ENCODE measurements at regions of chr12 and their contacts with region 1.

Region 1: DNA sequence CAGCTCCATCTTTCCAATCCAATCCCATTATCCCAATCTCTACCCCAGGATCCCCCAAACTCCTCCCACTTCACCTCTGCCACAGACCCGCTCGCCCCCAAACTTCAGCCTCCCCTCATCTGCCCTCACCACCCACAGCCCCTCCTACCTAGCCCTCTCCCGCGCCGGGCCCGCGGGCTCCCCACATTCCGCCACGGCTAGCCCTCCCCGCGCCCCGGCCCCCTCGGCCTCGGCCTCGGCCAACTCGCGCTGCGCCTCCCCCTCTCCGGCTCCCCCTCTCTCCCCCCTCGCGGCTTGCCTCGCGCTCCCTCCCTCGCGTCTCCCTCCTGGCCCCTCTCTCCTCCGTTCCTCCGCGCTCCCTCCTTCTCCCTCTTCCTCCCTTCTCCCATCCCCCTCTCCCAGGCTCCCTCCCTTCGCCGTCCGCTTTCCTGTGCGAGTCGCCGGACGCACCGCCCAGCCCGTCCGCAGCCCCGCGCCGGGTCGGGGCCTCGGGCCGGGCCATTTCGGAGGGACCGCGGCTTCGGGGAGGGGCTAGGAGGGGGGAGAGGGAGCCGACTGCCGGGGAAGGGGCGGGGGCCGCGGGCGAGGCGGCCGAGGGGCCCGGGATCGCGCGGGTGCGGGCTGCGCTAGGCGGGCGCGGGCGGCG is at the start of gene ATN1:
- DNase-seq: peak in 5 of 9 donors; percentile 41 to 66 (median 43)
- ATAC-seq: peak; percentile 35
- H3K4me3 ChIP-seq: peak within 1 kb of the TSS; percentile 64
- H3K4me3 Mint-ChIP-seq: peak within 1 kb of the TSS; percentile 85 to 99 (median 92)
- H3K27ac ChIP-seq: peak within 1 kb of the TSS; percentile 86
- H3K27ac Mint-ChIP-seq: peak within 1 kb of the TSS; percentile 88 to 98 (median 95)
- H3K4me1 ChIP-seq: peaks cover 16 to 37% of the 10 kb centered on the region in 2 donors
- H3K4me1 Mint-ChIP-seq: peaks cover 38 to 69% (median 56%) of the 10 kb centered on the region in 7 donors
- H3K27me3 ChIP-seq: no peaks in the 10 kb centered on the region
- H3K27me3 Mint-ChIP-seq: no peaks in the 10 kb centered on the region
- total RNA-seq, gene ATN1: 29.5 to 42.2 (median 34.4) TPM

Region 2: DNA sequence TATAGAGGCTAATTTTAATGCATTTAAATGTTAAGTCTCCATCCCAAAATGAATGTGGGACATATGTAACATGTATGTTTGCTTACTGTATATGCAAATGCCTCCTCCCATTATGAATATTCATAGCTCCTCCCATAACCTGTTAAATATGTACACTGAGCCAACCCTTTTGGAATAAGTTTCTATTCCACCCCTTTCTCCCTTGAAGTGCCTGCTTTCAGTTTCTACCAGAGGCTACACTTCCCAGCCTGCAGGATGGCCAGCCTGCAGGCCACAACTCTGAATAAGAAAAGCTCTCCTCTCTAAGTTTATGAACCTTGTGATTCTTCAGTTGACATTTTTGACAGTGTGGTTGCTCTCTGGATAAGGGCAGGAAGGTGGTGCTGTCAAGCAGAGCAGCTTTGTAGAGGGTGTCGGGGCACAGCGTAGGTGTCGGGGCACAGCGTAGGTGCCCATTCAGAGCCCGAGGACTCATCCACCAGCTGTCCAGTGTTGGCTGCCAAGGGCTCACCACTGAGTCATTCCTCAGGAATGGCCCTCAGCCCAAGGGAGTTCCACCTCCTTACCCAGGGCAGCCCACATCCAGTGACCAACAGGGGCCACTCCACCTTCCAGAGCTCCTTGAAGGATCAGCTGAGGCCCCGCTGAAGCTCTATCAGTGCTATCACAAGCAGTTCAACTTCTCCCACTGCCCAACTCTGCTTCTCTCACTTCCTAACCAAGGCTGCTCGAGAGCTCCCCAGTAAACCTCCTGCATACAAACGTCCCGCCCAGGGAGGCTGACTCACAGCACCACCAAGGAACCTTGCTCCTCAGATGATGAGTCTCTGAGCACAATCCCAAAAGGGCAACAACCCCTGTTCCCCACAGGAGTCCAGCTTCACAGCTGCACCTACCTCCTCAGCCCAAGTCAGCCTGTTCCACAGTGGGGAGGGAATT is 834.4 kb before region 1 on chr12:
- CTCF ChIA-PET with region 1: no interaction called
- POLR2A ChIA-PET with region 1: no interaction called
- intact Hi-C with region 1: no loop called
- DNase-seq: no peak
- ATAC-seq: peak; percentile 57
- H3K4me3 ChIP-seq: no peak overlapping the region
- H3K4me3 Mint-ChIP-seq: no peak overlapping the region
- H3K27ac ChIP-seq: no peak overlapping the region
- H3K27ac Mint-ChIP-seq: peak overlapping the region in 2 of 9 donors; percentile 20 to 84
- H3K4me1 ChIP-seq: no peaks in the 10 kb centered on the region
- H3K4me1 Mint-ChIP-seq: peaks cover 0 to 17% (median 6%) of the 10 kb centered on the region in 7 donors
- H3K27me3 ChIP-seq: peaks cover 0 to 4% of the 10 kb centered on the region in 2 donors
- H3K27me3 Mint-ChIP-seq: peaks cover 0 to 20% (median 6%) of the 10 kb centered on the region in 5 donors

Region 3: GRCh38 chr12:6796576-6796975 is 130.9 kb before region 1 on chr12:
- CTCF ChIA-PET with region 1: no interaction called
- POLR2A ChIA-PET with region 1: no interaction called
- intact Hi-C with region 1: no loop called
- DNase-seq: no peak
- ATAC-seq: no peak
- H3K4me3 ChIP-seq: no peak overlapping the region
- H3K4me3 Mint-ChIP-seq: peak overlapping the region in 3 of 10 donors; percentile 2 to 47 (median 45)
- H3K27ac ChIP-seq: no peak overlapping the region
- H3K27ac Mint-ChIP-seq: peak overlapping the region in 6 of 9 donors; percentile 52 to 97 (median 75)
- H3K4me1 ChIP-seq: peaks cover 0 to 28% of the 10 kb centered on the region in 2 donors
- H3K4me1 Mint-ChIP-seq: peaks cover 53 to 85% (median 75%) of the 10 kb centered on the region in 7 donors
- H3K27me3 ChIP-seq: no peaks in the 10 kb centered on the region
- H3K27me3 Mint-ChIP-seq: no peaks in the 10 kb centered on the region

Region 4: DNA sequence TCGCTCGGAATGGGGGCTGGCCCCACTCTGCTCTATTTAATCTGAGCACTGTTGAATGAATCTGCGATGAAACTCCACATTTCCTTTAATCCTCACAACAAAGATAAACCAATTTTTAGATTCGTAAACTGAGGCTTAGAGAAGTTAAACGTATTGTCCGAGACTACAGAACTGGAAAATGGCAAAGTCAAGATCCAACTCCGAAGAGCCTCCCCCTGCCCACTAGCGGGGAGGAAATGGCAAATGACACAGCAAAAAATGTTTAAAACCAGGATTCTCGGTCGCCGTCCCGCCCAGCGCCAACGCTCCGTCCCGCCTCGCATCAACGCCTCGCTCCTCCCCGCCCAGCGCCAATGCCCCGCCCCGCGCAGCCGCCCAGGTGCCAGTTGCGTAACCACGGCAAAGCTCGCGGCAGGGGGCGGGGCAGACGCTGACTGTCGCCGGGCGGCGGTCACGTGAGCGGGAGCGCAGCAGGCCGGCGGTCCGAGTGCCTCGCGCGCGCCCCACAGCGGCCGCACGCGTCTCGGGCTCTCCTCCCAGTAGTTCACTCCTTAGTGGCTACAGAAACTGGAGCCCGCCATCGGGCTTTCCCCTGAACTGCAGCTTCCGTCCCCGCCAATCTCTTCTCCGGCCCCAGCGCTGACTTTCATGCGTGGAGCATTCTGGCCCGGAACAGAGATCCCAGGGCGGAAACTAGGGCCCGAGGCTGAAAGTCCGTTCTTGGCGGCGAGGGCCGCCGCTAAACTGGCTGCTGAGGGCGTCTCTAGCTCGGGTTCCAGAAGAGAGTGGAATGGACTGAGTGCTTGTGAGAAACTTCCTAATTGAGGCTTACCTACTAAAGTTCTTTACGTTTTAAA is 36.5 kb before region 1 on chr12:
- CTCF ChIA-PET with region 1: interaction called, 7 read pairs
- POLR2A ChIA-PET with region 1: interaction called, 4 read pairs
- intact Hi-C with region 1: loop called (anchors 1 kb)
- DNase-seq: peak; percentile 95 to 100 (median 97)
- ATAC-seq: peak; percentile 96
- H3K4me3 ChIP-seq: peak overlapping the region; percentile 93
- H3K4me3 Mint-ChIP-seq: peak overlapping the region; percentile 78 to 86 (median 84)
- H3K27ac ChIP-seq: peak overlapping the region; percentile 86
- H3K27ac Mint-ChIP-seq: peak overlapping the region; percentile 82 to 94 (median 90)
- H3K4me1 ChIP-seq: peaks cover 6 to 10% of the 10 kb centered on the region in 2 donors
- H3K4me1 Mint-ChIP-seq: peaks cover 0 to 31% (median 11%) of the 10 kb centered on the region in 7 donors
- H3K27me3 ChIP-seq: no peaks in the 10 kb centered on the region
- H3K27me3 Mint-ChIP-seq: no peaks in the 10 kb centered on the region

Region 5: GRCh38 chr12:6914246-6914946 is 13.1 kb before region 1 on chr12 and contains the start of gene ENO2:
- CTCF ChIA-PET with region 1: interaction called, 14 read pairs
- POLR2A ChIA-PET with region 1: interaction called, 367 read pairs
- intact Hi-C with region 1: loop called (anchors 1 kb)
- DNase-seq: peak; percentile 68 to 90 (median 81)
- ATAC-seq: peak; percentile 96
- H3K4me3 ChIP-seq: peak within 1 kb of the TSS; percentile 79
- H3K4me3 Mint-ChIP-seq: peak within 1 kb of the TSS; percentile 88 to 100 (median 96)
- H3K27ac ChIP-seq: peak within 1 kb of the TSS; percentile 86
- H3K27ac Mint-ChIP-seq: peak within 1 kb of the TSS; percentile 86 to 99 (median 93)
- H3K4me1 ChIP-seq: peaks cover 11 to 14% of the 10 kb centered on the region in 2 donors
- H3K4me1 Mint-ChIP-seq: peaks cover 0 to 53% (median 36%) of the 10 kb centered on the region in 7 donors
- H3K27me3 ChIP-seq: no peaks in the 10 kb centered on the region
- H3K27me3 Mint-ChIP-seq: peaks cover 0 to 4% (median 0%) of the 10 kb centered on the region in 5 donors
- total RNA-seq, gene ENO2: 65.3 to 193 (median 178) TPM

Region 6: DNA sequence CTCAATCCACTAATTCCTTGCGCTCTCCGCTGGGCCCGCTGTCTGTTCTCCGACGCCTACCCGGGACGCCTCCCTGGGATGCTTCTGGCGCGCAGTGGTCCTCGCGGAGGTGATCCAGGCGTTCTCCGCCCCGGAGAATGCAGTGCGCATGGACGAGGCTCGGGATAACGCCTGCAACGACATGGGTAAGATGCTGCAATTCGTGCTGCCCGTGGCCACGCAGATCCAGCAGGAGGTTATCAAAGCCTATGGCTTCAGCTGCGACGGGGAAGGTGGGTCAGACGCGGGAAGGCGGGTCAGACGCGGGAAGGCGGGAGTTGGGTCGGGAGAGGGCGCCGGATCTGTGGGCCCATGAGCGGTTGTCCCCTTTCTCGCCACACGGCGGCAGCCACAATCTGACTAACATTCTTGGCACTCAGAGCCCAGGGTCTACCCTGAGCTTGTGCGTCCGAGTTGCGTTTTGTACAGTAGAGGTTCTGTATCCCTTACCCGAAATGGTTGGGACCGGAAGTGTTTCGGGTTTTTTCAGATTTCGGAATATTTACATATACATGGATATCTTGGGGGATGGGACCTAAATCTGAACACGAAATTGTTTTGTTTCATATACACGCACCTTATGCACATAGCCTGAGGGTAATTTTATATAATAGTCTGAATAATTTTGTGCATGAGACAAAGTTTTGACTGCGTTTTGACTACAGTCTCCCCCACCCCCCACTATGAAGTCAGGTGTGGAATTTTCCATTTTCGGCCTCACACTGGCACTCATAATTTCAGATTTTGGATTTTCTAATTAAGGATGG is 17.1 kb after region 1 on chr12:
- CTCF ChIA-PET with region 1: interaction called, 14 read pairs
- POLR2A ChIA-PET with region 1: interaction called, 367 read pairs
- intact Hi-C with region 1: loop called in 1 of 2 experiments (anchors 1 kb)
- DNase-seq: peak; percentile 70 to 87 (median 84)
- ATAC-seq: peak; percentile 65
- H3K4me3 ChIP-seq: peak overlapping the region; percentile 94
- H3K4me3 Mint-ChIP-seq: peak overlapping the region; percentile 88 to 100 (median 96)
- H3K27ac ChIP-seq: peak overlapping the region; percentile 95
- H3K27ac Mint-ChIP-seq: peak overlapping the region; percentile 95 to 100 (median 98)
- H3K4me1 ChIP-seq: peaks cover 56% of the 10 kb centered on the region in 2 donors
- H3K4me1 Mint-ChIP-seq: peaks cover 42 to 75% (median 60%) of the 10 kb centered on the region in 7 donors
- H3K27me3 ChIP-seq: no peaks in the 10 kb centered on the region
- H3K27me3 Mint-ChIP-seq: no peaks in the 10 kb centered on the region

Region 7: DNA sequence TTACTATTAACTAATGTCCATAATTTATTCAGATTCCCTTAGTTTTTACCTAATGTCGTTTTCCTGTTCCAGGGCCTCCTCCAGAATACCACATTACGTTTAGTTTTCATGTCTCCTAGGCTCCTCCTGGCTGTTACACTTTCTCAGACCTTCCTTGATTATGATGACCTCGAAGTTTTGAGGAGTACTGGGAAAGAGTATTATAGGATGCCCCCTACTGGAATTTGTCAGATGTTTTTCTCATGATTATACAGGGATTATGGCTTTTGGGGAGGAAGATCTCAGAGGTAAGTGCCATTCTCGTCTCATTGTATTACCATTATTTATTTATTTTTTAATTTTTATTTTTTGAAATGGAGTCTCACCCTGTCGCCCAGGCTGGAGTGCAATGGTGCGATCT is 115.3 kb after region 1 on chr12:
- CTCF ChIA-PET with region 1: no interaction called
- POLR2A ChIA-PET with region 1: no interaction called
- intact Hi-C with region 1: loop called in 1 of 2 experiments (anchors 1 kb)
- DNase-seq: peak in 4 of 9 donors; percentile 5 to 12 (median 11)
- ATAC-seq: peak; percentile 40
- H3K4me3 ChIP-seq: no peak overlapping the region
- H3K4me3 Mint-ChIP-seq: no peak overlapping the region
- H3K27ac ChIP-seq: no peak overlapping the region
- H3K27ac Mint-ChIP-seq: no peak overlapping the region
- H3K4me1 ChIP-seq: no peaks in the 10 kb centered on the region
- H3K4me1 Mint-ChIP-seq: peaks cover 0 to 19% (median 15%) of the 10 kb centered on the region in 7 donors
- H3K27me3 ChIP-seq: no peaks in the 10 kb centered on the region
- H3K27me3 Mint-ChIP-seq: peaks cover 0 to 5% (median 0%) of the 10 kb centered on the region in 5 donors

Region 8: DNA sequence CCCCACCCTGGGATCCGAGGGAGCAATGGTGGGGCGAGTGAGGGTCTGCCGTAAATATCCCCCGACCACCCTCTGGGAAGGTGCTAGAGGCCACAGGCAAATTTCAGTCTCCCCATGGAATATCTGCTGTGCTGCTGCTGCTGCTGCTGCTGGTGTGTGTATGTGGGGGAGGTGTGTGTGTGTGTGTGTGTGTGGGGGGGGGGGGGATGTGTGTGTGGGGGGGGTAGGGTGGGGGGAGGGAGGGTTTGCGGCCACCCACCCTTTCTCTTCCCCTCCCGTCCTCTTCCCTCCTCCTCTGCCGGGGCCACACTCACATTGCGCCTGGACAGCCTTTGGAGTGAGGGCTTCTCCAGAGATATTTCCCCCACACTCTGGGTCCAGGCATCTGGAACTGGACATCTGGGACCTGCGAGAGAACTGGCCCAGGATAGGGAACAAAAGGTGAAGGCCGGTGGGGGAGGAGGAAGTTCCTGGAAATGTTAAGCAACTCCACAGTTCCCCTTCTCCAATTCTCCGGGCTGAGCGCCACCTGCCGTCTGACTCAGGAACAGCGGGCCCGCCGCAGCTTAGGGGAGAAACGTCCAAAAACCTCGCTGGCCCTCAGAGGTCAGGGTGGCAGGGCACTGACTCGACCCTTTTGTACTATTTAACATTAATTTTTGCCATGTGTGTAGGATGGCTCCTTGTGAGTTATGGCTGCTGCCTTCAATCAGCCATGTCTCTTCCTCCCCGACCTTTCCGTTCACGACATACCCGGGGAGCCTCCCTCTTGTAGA is 181.5 kb after region 1 on chr12 and contains the start of gene C1RL:
- CTCF ChIA-PET with region 1: interaction called, 27 read pairs
- POLR2A ChIA-PET with region 1: interaction called, 5 read pairs
- intact Hi-C with region 1: loop called (anchors 1 kb)
- DNase-seq: peak; percentile 50 to 88 (median 65)
- ATAC-seq: peak; percentile 69
- H3K4me3 ChIP-seq: peak within 1 kb of the TSS; percentile 95
- H3K4me3 Mint-ChIP-seq: peak within 1 kb of the TSS; percentile 90 to 98 (median 94)
- H3K27ac ChIP-seq: peak within 1 kb of the TSS; percentile 79
- H3K27ac Mint-ChIP-seq: peak within 1 kb of the TSS; percentile 84 to 95 (median 93)
- H3K4me1 ChIP-seq: peaks cover 6% of the 10 kb centered on the region in 2 donors
- H3K4me1 Mint-ChIP-seq: peaks cover 29 to 64% (median 43%) of the 10 kb centered on the region in 7 donors
- H3K27me3 ChIP-seq: no peaks in the 10 kb centered on the region
- H3K27me3 Mint-ChIP-seq: no peaks in the 10 kb centered on the region
- total RNA-seq, gene C1RL: 18.5 to 38.6 (median 24.4) TPM